ENCODE measurements at regions of chr19 and their contacts with region 1.

Region 1: GRCh38 chr19:55080968-55081772 is 5.5 kb downstream of the EPS8L1 start:
- DNase-seq: peak; percentile 84 to 90 (median 86)
- H3K4me3 ChIP-seq: peak overlapping the region; percentile 77 to 86
- H3K4me3 Mint-ChIP-seq: peak overlapping the region; percentile 81 to 91 (median 84)
- H3K27ac ChIP-seq: peak overlapping the region; percentile 9
- H3K27ac Mint-ChIP-seq: peak overlapping the region; percentile 48 to 78 (median 68)
- H3K4me1 ChIP-seq: peaks cover 23% of the 10 kb centered on the region
- H3K4me1 Mint-ChIP-seq: peaks cover 12 to 39% (median 24%) of the 10 kb centered on the region in 4 donors
- H3K27me3 ChIP-seq: no peaks in the 10 kb centered on the region
- H3K27me3 Mint-ChIP-seq: peaks cover 25 to 53% of the 10 kb centered on the region in 2 donors

Region 2: DNA sequence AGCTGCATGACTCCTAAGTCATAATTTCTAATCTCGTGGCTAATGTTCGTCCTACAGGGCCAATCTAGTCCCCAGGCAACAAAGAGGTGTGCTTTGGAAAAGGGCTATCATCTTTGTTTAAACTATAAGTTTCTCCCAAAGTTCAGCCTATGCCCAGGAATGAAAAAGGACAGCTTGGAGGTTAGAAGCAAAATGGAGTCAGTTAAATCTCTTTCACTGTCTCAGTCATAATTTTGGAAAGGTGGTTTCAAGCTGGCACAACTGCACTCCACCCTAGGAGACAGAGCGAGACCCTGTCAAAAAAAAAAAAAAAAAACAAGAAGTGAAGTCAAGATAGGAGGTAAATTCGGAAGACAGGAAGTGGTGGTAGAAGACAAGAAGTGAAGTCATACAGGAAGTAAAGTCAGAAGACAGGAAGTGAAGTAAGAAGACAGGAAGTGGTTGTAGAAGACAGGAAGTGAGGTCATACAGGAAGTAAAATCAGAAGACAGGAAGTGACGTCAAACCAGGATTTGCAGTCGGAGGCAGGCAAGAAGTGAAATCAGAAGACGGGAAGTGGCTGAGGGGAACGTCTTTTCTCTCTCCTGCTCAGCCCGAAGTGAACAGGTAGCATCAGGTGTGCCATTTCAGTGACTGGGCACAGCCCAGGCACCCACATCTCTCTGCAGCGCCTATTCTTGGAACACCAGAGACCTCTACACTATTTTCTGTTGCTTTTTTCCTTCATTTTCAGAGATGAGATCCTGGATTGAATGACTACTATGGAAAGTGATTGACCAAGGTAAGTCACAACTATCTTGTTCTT is 75.3 kb before region 1 on chr19:
- CTCF ChIA-PET with region 1: no interaction called
- POLR2A ChIA-PET with region 1: no interaction called
- intact Hi-C with region 1: loop called (anchors 2 kb)
- DNase-seq: peak; percentile 80 to 93 (median 87)
- H3K4me3 ChIP-seq: peak overlapping the region; percentile 26 to 35
- H3K4me3 Mint-ChIP-seq: peak overlapping the region; percentile 74 to 91 (median 86)
- H3K27ac ChIP-seq: peak overlapping the region; percentile 57
- H3K27ac Mint-ChIP-seq: peak overlapping the region; percentile 87 to 98 (median 93)
- H3K4me1 ChIP-seq: peaks cover 14% of the 10 kb centered on the region
- H3K4me1 Mint-ChIP-seq: peaks cover 14 to 49% (median 25%) of the 10 kb centered on the region in 4 donors
- H3K27me3 ChIP-seq: no peaks in the 10 kb centered on the region
- H3K27me3 Mint-ChIP-seq: peaks cover 5 to 17% of the 10 kb centered on the region in 2 donors

Region 3: DNA sequence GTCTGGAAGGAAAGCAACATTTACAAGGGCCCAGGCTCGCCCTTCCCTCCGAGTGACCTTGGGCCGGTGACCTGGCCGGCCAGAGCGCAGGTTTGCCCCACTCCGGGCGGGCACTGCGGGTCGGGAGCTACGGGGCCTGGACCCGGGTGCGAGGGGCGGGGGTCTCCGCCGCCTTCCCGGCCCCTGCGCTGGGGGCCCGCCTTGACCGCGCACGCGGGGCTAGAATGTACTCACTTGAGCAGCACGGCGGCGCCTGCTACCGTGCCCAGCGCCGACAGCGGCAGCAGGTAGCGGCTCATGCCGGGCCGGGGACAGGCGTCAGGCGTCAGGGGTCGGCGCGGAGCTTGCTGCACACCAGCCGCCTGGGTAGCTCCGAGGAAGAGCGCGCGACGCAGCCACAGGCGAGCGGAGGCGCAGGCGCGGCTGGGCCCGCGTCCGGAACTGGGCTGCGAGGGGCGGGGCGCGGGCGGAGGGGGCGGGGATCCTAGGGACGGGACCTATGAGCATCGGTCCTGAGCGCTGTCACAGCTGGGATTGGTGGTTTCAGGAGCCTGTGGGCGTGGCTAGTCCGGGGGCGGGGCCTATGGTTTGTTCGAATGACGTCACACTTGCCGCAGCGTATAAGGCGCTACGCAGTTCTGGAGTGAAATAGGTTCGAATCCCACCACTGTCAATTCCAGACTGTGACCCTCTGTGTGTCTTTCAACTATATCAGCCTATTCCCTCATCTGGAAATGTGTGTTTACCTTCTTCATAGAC is 18.3 kb before region 1 on chr19 and contains the start of gene RDH13:
- CTCF ChIA-PET with region 1: no interaction called
- POLR2A ChIA-PET with region 1: interaction called, 20 read pairs
- intact Hi-C with region 1: loop called (anchors 1 kb)
- DNase-seq: peak; percentile 94 to 97 (median 97)
- H3K4me3 ChIP-seq: peak within 1 kb of the TSS; percentile 23 to 84
- H3K4me3 Mint-ChIP-seq: peak within 1 kb of the TSS; percentile 84 to 90 (median 87)
- H3K27ac ChIP-seq: peak within 1 kb of the TSS; percentile 62
- H3K27ac Mint-ChIP-seq: peak within 1 kb of the TSS; percentile 47 to 90 (median 84)
- H3K4me1 ChIP-seq: peaks cover 15% of the 10 kb centered on the region
- H3K4me1 Mint-ChIP-seq: peaks cover 8 to 21% (median 11%) of the 10 kb centered on the region in 4 donors
- H3K27me3 ChIP-seq: no peaks in the 10 kb centered on the region
- H3K27me3 Mint-ChIP-seq: peaks cover 15 to 23% of the 10 kb centered on the region in 2 donors
- total RNA-seq, gene RDH13: 23.9 to 27.4 TPM

Measured in CD4-positive, alpha-beta memory T cell (primary cell).